PC-3 (cell line): ENCODE measurements at regions of chr3 and their contacts with region 1.

Region 1: GRCh38 chr3:122151480-122151879 is 32.0 kb upstream of the CASR start:
- DNase-seq: peak; percentile 36
- ATAC-seq: no peak
- H3K4me3 ChIP-seq: no peak overlapping the region
- H3K27ac ChIP-seq: no peak overlapping the region
- H3K4me1 ChIP-seq: no peaks in the 10 kb centered on the region
- H3K27me3 ChIP-seq: no peaks in the 10 kb centered on the region
- CTCF ChIP-seq: no peak

Region 2: GRCh38 chr3:122271246-122271898 is 119.9 kb after region 1 on chr3:
- CTCF ChIA-PET with region 1: no interaction called
- POLR2A ChIA-PET with region 1: interaction called, 17 read pairs
- intact Hi-C with region 1: no loop called
- DNase-seq: no peak
- ATAC-seq: no peak
- H3K4me3 ChIP-seq: no peak overlapping the region
- H3K27ac ChIP-seq: no peak overlapping the region
- H3K4me1 ChIP-seq: no peaks in the 10 kb centered on the region
- H3K27me3 ChIP-seq: peaks cover 45% of the 10 kb centered on the region
- CTCF ChIP-seq: no peak